AG04450 (cell line): ENCODE measurements at regions of chr2 and their contacts with region 1.

Region 1: GRCh38 chr2:112941753-112942658 is 31.0 kb downstream of the IL37 start:
- DNase-seq: peak; percentile 50
- H3K4me3 ChIP-seq: no peak overlapping the region
- H3K27ac ChIP-seq: no peak overlapping the region
- H3K27me3 ChIP-seq: peaks cover 10% of the 10 kb centered on the region
- CTCF ChIP-seq: peak; percentile 98

Region 2: DNA sequence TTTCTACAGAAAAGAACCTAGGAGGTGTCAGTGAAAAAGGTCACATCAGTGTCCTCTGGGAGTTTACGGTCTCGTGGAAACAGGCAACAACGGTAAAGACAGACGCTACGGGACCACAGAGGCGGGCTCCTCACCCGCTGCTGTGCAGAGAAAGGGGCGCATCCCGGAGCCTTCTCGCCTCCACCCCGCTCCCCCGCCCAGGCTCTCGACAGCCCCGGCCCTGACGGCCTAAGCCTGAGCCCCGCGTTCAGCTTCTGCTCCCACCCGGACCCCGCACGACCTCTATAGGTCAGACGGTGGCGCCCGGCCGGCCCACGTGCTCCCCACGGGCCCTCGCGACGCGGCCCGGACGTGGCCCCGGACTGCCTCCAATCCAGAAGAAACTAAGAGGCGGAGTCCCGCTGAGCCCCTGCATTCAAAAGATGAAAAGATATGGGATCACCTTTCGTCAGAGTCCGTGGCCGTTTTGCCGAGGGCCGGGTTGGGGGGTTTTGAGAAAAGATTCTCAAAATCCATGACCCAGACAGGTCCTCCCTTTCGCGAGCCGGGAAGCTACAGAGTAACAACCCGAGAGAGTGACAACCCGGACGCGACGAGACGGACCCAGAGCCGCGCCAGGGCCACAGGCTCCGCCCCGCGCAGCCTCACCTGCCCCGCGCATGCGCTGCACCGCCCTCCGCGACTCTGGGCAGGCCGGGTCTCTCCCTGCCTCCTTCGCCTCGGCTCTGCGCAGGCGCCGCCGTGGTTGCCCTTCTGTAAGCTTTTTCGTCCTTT is 687.4 kb before region 1 on chr2 and contains the start of gene ZC3H8:
- CTCF ChIA-PET with region 1: interaction called, 13 read pairs
- POLR2A ChIA-PET with region 1: no interaction called
- DNase-seq: peak; percentile 47
- H3K4me3 ChIP-seq: peak within 1 kb of the TSS; percentile 74
- H3K27ac ChIP-seq: no peak within 1 kb of the TSS
- H3K27me3 ChIP-seq: no peaks in the 10 kb centered on the region
- CTCF ChIP-seq: no peak
- polyA plus RNA-seq, gene ZC3H8: 2.8 and 4.4 TPM in 2 replicates

Region 3: GRCh38 chr2:112737542-112738232 is 204.3 kb before region 1 on chr2:
- CTCF ChIA-PET with region 1: interaction called, 29 read pairs
- POLR2A ChIA-PET with region 1: no interaction called
- DNase-seq: no peak
- H3K4me3 ChIP-seq: no peak overlapping the region
- H3K27ac ChIP-seq: no peak overlapping the region
- H3K27me3 ChIP-seq: no peaks in the 10 kb centered on the region
- CTCF ChIP-seq: no peak

Region 4: DNA sequence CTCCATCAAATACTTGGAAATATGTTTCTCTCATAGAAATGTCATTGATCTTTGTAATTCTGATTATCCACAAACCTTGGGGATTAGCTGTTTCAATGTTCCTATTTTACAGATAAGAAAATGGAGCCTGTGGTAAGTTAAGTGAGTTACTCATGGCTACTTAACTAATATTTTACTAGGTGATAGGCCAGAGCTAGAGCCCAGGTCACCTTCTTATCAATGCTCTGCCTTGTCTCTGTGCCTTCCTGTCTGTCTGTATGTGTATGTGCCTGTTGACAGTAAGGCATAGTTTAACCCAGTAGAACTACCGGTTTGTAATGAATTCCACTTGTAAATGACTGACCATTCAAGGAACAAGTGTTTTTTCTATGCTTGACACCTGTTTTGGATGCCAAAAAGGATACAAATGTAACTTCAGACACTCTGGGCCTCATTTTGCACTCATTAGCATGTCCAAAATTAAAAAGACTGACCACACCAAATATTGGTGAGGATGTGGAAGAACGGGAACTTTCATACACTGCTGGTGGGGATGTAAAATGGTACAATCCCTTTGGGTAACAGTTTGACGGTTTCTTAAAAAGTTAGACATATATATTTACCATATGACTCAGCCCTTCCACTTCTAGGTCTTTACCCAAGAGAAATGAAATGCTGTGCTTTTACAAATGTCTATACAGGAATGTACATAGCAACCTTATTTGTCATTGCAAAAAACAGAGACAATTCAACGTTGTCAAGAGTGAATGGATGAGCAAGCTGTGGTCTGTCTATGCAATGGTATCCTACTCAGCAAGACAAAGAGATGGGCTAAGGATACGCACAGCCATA is 138.1 kb before region 1 on chr2:
- CTCF ChIA-PET with region 1: interaction called, 10 read pairs
- POLR2A ChIA-PET with region 1: no interaction called
- DNase-seq: peak; percentile 67
- H3K4me3 ChIP-seq: no peak overlapping the region
- H3K27ac ChIP-seq: no peak overlapping the region
- H3K27me3 ChIP-seq: no peaks in the 10 kb centered on the region
- CTCF ChIP-seq: no peak

Region 5: DNA sequence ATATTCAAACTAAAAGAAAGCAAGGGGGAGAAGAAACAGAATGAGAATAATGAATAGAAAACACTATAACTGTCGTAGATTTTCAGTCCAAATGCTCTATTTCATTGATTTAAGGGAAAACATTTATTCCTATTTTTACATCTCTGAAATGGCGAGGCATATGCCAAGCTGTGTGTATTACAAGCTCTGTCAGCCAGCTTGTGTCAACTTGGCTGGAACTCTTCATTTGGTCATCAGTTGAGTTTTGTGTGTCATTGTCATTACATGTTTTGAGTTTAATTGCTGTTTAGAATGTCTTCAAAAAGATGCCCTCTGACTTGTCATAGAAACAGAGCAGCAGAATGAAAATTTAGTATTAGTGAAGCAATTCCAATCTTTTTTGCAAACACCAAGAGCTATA is 39.2 kb before region 1 on chr2:
- CTCF ChIA-PET with region 1: interaction called, 11 read pairs
- POLR2A ChIA-PET with region 1: no interaction called
- DNase-seq: no peak
- H3K4me3 ChIP-seq: no peak overlapping the region
- H3K27ac ChIP-seq: no peak overlapping the region
- H3K27me3 ChIP-seq: no peaks in the 10 kb centered on the region
- CTCF ChIP-seq: no peak

Region 6: DNA sequence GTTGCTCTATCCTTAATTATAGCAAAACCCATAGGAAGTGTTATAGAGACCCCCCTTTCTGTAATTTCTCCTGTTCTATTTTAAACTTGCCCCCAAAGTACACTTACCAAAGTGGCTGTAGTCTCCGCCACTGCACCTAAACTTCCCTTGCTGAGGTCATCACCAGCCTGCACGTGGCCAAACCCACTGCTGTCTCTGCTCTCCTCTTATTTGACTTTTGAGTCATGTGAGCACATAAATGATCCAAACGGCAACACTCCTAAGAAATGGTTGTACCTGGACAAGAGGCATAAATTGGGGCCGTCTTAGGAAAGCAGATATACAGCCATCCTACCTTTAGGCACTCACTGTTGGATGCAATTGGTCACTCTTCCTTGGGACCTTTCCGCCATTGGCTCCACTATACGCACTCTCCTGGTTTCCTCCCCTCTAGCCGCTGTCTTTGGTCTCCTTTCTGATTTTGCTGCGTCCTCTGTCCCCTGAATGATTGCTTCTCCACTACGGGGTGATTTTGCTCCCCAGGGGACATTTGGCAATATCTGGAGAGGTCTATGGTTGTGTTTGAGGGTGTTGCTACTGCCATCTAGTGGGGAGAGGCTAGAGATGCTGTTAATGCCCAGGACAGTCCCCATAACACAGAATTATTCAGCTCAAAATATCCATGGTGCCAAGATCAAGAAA is 16.6 kb after region 1 on chr2:
- CTCF ChIA-PET with region 1: interaction called, 36 read pairs
- POLR2A ChIA-PET with region 1: no interaction called
- DNase-seq: peak; percentile 30
- H3K4me3 ChIP-seq: no peak overlapping the region
- H3K27ac ChIP-seq: no peak overlapping the region
- H3K27me3 ChIP-seq: peaks cover 25% of the 10 kb centered on the region
- CTCF ChIP-seq: peak; percentile 89

Region 7: DNA sequence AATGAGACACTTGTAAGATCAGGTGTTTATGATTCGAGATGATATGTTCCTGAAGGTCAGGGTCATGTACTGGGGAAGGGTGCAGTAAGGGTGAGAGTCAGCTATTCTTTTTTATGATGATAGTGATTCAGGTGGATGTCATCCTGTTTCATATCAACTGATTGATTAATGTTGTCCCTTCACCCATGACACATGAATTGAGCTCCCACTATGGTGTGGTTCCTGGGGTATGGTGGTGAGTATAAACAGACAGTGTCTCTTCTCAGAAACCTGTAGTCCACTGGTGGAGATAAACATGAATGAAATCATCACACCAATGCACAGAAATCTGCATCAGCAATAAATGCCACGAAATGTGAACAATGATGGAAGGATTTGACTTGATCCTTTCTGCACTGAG is 374.1 kb after region 1 on chr2:
- CTCF ChIA-PET with region 1: no interaction called
- POLR2A ChIA-PET with region 1: no interaction called
- DNase-seq: no peak
- H3K4me3 ChIP-seq: no peak overlapping the region
- H3K27ac ChIP-seq: no peak overlapping the region
- H3K27me3 ChIP-seq: peaks cover 16% of the 10 kb centered on the region
- CTCF ChIP-seq: no peak